Thyroid gland (tissue), 4 donors: ENCODE measurements at regions of chr7 and their contacts with region 1.

Region 1: GRCh38 chr7:30276203-30276900 is 8.0 kb upstream of the ZNRF2 start:
- DNase-seq: peak; percentile 28 to 43
- H3K4me3 ChIP-seq: no peak overlapping the region
- H3K27ac ChIP-seq: no peak overlapping the region
- H3K4me1 ChIP-seq: peaks cover 0 to 7% of the 10 kb centered on the region in 2 donors
- H3K27me3 ChIP-seq: no peaks in the 10 kb centered on the region
- CTCF ChIP-seq: peak in 5 of 6 experiments; percentile 20 to 61 (median 51)
- POLR2A ChIP-seq: no peak

Region 2: DNA sequence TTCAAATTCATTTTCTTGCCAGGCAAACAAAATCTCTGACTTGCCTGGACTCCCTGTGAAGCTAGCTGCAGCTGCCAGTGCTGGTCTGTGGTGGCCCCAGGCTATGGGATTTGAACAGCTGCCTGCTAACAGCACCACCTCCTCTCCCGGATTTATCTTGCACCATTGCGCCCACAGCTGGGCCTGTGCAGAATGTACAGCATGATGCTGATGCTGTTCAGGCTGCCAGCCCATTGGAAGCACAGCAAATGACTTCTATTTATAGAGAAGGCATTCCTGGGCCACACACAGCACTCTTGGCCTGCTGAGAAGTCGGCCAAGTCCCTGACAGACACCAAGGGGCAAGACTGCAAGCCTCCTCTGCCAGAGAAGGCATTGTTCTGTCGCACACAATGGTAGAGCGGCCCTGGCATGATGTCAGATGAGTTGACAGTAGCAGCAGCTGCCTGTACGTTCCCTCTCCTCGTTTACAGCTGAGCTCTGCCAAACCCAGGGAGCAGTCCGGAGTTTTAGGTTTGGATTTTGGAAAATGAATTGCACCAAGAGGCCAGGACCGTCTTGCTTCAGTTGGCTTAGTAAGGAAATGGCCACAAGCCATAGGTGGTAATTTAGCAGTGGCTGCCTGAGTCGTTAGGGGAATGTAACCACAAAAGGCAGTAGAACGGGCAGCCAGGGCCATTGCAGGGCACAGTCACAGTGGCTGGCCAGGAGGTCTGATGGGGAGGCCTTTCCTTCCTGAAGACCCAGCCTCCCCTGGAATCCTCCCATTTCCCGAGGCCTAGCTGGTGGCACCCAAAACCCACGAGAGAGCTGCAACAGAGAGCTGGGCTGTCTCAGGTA is 103.1 kb before region 1 on chr7:
- intact Hi-C with region 1: loop called (anchors 10 kb)
- DNase-seq: peak in 1 of 2 donors; percentile 25
- H3K4me3 ChIP-seq: no peak overlapping the region
- H3K27ac ChIP-seq: peak overlapping the region in 2 of 3 donors; percentile 8 to 41
- H3K4me1 ChIP-seq: peaks cover 5 to 26% of the 10 kb centered on the region in 2 donors
- H3K27me3 ChIP-seq: no peaks in the 10 kb centered on the region
- CTCF ChIP-seq: no peak
- POLR2A ChIP-seq: no peak

Region 3: DNA sequence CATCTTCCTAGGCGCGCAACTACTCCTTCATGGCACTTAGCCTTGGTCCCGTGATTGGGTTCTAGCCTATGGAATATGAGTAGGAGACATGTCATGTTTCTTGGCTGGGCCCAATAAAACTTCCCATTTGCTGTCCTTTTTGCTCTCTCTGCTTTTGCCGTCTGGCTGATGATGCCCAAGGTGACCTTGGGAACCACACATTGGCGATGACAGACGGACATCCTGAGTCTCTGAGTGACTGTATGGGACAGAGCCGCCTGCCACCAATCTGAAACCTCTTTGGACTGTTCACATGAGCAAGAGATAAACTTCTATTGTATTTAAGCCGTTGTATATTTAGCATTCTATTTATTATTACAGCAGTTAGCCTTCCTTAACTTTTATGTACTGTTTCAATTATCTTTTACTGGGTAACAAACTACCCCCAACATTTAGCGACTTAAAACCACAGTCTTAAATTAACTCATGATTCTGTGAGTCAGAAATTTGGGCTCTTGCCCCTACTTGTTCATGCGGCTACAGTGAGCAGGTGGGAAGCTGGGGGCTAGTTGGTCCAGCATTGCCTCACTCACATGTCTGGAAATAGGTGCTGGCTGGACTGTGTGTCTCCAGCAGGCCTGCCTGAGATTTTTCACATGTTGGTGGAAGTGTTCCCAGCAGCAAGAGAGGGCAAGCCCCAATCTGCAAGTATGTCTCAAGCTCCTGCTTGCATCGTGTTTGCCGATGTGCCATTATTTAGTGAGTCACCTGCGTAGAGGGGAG is 130.5 kb after region 1 on chr7:
- intact Hi-C with region 1: loop called (anchors 10 kb)
- DNase-seq: no peak
- H3K4me3 ChIP-seq: no peak overlapping the region
- H3K27ac ChIP-seq: no peak overlapping the region
- H3K4me1 ChIP-seq: peaks cover 0 to 5% of the 10 kb centered on the region in 2 donors
- H3K27me3 ChIP-seq: no peaks in the 10 kb centered on the region
- CTCF ChIP-seq: no peak
- POLR2A ChIP-seq: no peak

Region 4: GRCh38 chr7:30800785-30801252 is 524.5 kb after region 1 on chr7:
- intact Hi-C with region 1: no loop called
- DNase-seq: peak; percentile 62 to 63
- H3K4me3 ChIP-seq: no peak overlapping the region
- H3K27ac ChIP-seq: peak overlapping the region in 1 of 3 donors; percentile 41
- H3K4me1 ChIP-seq: peaks cover 17 to 53% of the 10 kb centered on the region in 2 donors
- H3K27me3 ChIP-seq: no peaks in the 10 kb centered on the region
- CTCF ChIP-seq: peak; percentile 19 to 86 (median 70)
- POLR2A ChIP-seq: no peak